ENCODE measurements at regions of chr7 and their contacts with region 1.

Region 1: GRCh38 chr7:104983578-104984539 is 30.1 kb upstream of the KMT2E start:
- DNase-seq: peak; percentile 84
- ATAC-seq: peak; percentile 94
- H3K4me3 ChIP-seq: peak overlapping the region; percentile 81
- H3K27ac ChIP-seq: peak overlapping the region; percentile 93
- H3K4me1 ChIP-seq: peaks cover 63% of the 10 kb centered on the region
- H3K27me3 ChIP-seq: no peaks in the 10 kb centered on the region
- CTCF ChIP-seq: peak; percentile 41

Region 2: GRCh38 chr7:104883718-104884452 is 100.0 kb before region 1 on chr7:
- CTCF ChIA-PET with region 1: no interaction called
- POLR2A ChIA-PET with region 1: no interaction called
- intact Hi-C with region 1: no loop called
- DNase-seq: peak; percentile 78
- ATAC-seq: peak; percentile 98
- H3K4me3 ChIP-seq: no peak overlapping the region
- H3K27ac ChIP-seq: no peak overlapping the region
- H3K4me1 ChIP-seq: no peaks in the 10 kb centered on the region
- H3K27me3 ChIP-seq: peaks cover 6% of the 10 kb centered on the region; the same call in 1 of the 2 replicates
- CTCF ChIP-seq: peak; percentile 91

Region 3: DNA sequence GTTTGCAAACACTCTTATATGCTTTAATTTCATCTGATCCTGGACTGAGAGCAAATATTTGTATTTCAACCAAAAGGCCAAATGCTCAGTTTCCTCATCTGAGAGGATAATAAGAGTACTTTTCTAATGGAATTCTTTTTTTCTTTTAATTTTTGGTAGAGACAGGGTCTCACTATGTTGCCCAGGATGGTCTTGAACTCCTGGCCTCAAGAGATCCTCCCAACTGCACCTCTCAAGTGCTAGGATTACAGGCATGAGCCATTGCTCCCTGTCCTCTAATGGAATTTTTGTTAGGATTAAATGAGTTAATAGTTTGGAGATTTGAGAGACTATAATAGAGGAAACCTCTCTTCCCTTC is 38.3 kb before region 1 on chr7:
- CTCF ChIA-PET with region 1: interaction called, 7 read pairs
- POLR2A ChIA-PET with region 1: interaction called, 4 read pairs
- intact Hi-C with region 1: loop called (anchors 1 kb)
- DNase-seq: no peak
- ATAC-seq: no peak
- H3K4me3 ChIP-seq: peak overlapping the region; percentile 32; the same call in 1 of the 2 replicates
- H3K27ac ChIP-seq: peak overlapping the region; percentile 100
- H3K4me1 ChIP-seq: peaks cover 18% of the 10 kb centered on the region
- H3K27me3 ChIP-seq: no peaks in the 10 kb centered on the region
- CTCF ChIP-seq: no peak

Region 4: GRCh38 chr7:105003275-105003674 is 19.4 kb after region 1 on chr7:
- CTCF ChIA-PET with region 1: interaction called, 7 read pairs
- POLR2A ChIA-PET with region 1: no interaction called
- intact Hi-C with region 1: loop called (anchors 2 kb)
- DNase-seq: peak; percentile 63
- ATAC-seq: peak; percentile 87
- H3K4me3 ChIP-seq: peak overlapping the region; percentile 25; the same call in 1 of the 2 replicates
- H3K27ac ChIP-seq: 0 out of 2 replicates have a peak overlapping the region, but pooled peaks have one; percentile 3
- H3K4me1 ChIP-seq: peaks cover 41% of the 10 kb centered on the region
- H3K27me3 ChIP-seq: no peaks in the 10 kb centered on the region
- CTCF ChIP-seq: no peak

Region 5: GRCh38 chr7:105026750-105027149 is 42.9 kb after region 1 on chr7:
- CTCF ChIA-PET with region 1: no interaction called
- POLR2A ChIA-PET with region 1: interaction called, 20 read pairs
- intact Hi-C with region 1: no loop called
- DNase-seq: peak; percentile 36
- ATAC-seq: 0 out of 2 replicates have a peak, but pooled peaks have one; percentile 27
- H3K4me3 ChIP-seq: no peak overlapping the region
- H3K27ac ChIP-seq: no peak overlapping the region
- H3K4me1 ChIP-seq: peaks cover 34% of the 10 kb centered on the region
- H3K27me3 ChIP-seq: no peaks in the 10 kb centered on the region
- CTCF ChIP-seq: no peak

Region 6: DNA sequence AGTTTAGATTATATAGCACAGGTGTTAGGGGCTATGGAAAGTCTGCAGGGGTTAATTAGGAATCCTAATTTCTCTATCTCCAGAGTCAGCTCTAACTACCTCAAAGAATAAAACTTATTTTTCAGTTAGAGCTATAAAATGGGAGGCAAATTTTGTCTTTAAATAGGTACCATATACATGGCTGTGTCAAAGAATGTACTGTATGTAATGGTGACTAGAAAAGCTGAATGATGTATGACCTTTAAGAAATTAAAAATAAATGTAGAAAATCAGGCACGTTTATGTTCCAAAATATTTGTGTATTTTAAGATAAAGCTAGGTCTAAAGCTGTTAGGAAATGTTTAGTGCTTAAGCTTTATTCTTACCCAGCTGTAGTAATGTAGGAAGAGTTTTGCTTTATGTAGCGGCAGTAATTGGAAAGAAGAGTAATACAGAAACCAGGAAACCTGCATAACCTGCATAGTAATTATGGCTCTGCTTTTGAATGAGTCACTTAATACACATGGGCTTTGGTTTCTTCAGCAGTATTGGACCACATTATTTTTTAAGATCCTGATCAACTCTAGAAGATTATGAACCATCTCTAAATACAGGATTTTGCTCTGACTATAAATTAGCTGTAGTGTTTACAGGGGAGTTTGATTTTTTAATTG is 115.1 kb after region 1 on chr7:
- CTCF ChIA-PET with region 1: no interaction called
- POLR2A ChIA-PET with region 1: no interaction called
- intact Hi-C with region 1: loop called (anchors 10 kb)
- DNase-seq: peak; percentile 82
- ATAC-seq: peak; percentile 68
- H3K4me3 ChIP-seq: no peak overlapping the region
- H3K27ac ChIP-seq: peak overlapping the region; percentile 53
- H3K4me1 ChIP-seq: peaks cover 52% of the 10 kb centered on the region
- H3K27me3 ChIP-seq: no peaks in the 10 kb centered on the region
- CTCF ChIP-seq: no peak

Region 7: DNA sequence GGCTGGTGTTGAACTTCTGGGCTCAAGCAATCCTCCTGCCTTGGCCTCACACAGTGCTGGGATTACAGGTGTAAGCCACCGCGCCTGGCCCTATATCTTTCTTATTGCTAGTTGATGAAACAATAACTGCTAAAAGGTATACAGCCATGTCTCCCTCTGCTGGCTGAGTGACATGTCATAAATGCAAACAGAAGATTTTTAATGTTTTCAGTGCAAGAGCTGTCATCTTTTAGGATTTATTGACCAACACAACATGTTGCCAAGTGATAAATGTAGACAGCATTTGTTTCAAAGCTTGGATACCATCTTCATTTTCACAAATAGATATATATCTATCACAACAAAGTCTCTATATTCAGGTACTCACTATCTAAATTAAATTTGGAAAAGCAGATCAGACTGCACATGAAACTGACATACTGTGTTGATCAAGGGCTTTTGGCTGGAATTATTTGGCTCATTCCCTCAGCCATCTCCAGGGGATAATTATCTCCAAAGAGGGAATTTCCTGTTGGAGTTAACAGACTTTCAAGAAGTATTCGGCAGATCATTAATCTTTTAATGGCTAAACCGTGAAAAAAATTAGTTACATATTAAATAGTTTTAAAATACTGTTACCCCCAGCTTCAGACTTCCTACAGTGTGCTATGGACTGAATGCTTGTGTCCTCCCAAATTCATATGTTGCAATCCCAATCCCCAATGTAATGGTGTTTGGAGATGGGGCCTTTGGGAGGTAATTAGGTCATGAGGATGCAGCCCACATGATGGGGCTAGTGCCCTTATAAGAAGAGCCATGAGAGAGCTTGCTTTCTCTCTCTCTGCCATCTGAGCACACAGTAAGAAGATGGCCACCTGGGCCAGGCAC is 446.1 kb after region 1 on chr7:
- CTCF ChIA-PET with region 1: no interaction called
- POLR2A ChIA-PET with region 1: no interaction called
- intact Hi-C with region 1: loop called (anchors 1 kb)
- DNase-seq: peak; percentile 72
- ATAC-seq: peak; percentile 82
- H3K4me3 ChIP-seq: no peak overlapping the region
- H3K27ac ChIP-seq: no peak overlapping the region
- H3K4me1 ChIP-seq: no peaks in the 10 kb centered on the region
- H3K27me3 ChIP-seq: no peaks in the 10 kb centered on the region
- CTCF ChIP-seq: peak; percentile 65